ENCODE measurements at regions of chr11 and their contacts with region 1.

Region 1: DNA sequence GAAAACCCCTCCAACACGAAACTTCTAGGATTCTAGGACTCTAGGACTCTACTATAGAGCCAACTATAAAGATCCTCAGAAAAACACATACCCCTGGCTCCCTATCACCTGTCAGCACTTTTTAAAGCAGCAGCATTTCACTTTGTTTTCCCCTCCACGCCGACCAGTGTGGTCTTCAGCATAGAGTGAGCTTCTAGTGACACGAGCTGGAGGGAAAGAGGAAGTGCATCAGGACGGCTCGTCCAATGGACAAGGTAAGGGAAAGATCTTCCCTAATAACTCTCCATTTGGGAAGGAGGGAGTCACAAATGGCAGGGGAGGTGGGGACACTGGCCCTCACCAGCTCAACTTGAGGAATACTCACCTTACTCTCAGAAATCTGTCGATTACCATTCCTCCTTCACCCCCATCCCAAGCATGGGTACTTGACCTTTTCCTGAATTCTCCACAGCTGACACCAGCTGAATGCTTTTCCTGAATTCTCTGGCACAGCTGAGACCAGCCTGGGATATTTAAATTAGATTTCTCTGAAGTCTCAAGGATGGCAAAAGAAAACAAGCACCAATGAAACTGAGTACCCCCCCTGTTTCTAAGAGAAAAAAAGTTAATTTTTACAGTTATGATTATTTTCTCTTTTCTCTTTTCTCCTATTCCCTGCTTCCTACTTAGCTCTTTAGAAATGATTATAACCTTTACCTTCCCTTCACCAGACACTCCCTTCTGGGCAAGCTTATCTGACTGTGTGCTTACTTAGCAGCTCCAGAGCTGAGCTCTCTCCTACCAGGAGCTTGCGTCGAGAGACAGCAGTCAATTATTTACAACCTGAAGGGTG is 33.3 kb upstream of the NNMT start:
- DNase-seq: peak in 4 of 10 donors; percentile 60 to 67 (median 62)
- H3K4me3 ChIP-seq: no peak overlapping the region
- H3K27ac ChIP-seq: peak overlapping the region in 1 of 59 donors; percentile 1
- H3K27me3 ChIP-seq: no peaks in the 10 kb centered on the region
- CTCF ChIP-seq: peak; percentile 44 to 89 (median 72)

Region 2: GRCh38 chr11:113896156-113896879 is 366.6 kb before region 1 on chr11:
- intact Hi-C with region 1: loop called (anchors 1 to 5 kb)
- DNase-seq: peak in 7 of 10 donors; percentile 36 to 67 (median 45)
- H3K4me3 ChIP-seq: no peak overlapping the region
- H3K27ac ChIP-seq: peak overlapping the region in 28 of 59 donors; percentile 3 to 75 (median 46)
- H3K27me3 ChIP-seq: no peaks in the 10 kb centered on the region
- CTCF ChIP-seq: peak; percentile 59 to 90 (median 80)

Region 3: DNA sequence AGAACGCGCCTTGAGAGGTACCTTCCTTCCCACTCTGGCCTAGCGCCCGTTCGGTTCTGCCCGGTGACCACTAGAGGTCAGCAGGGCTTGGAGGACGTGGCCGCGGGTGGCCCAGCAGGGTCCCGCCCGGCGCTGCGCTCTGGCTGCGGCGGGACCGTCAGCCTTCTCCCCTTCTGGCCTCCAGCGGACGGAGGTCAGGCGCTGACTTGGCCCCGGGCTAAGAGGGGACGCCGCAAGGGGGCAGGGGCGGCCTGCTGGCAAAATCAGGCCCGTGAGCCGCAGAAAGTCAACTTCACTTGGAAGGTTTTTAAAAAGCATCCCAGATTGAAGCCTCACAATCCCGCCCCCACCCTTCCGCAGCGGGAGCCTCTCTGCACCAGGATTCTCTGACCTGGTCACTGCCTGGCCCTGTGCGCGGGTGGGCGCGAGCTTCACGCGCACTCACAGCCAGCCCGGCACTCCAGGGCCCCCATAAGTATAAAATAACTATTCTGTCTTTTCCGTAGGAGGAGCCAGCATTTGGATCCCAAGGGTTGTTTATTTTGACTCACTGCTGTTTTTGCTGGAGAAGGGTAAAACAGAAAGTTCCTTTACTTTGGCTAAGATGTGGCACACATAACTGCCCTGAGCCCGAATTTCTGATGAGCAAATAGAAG is 226.6 kb before region 1 on chr11:
- intact Hi-C with region 1: loop called (anchors 1 to 5 kb)
- DNase-seq: peak; percentile 63 to 85 (median 75)
- H3K4me3 ChIP-seq: peak overlapping the region; percentile 18 to 73 (median 55)
- H3K27ac ChIP-seq: peak overlapping the region in 44 of 59 donors; percentile 4 to 81 (median 53)
- H3K27me3 ChIP-seq: no peaks in the 10 kb centered on the region
- CTCF ChIP-seq: peak; percentile 70 to 97 (median 92)

Region 4: GRCh38 chr11:114159802-114160632 is 102.9 kb before region 1 on chr11:
- intact Hi-C with region 1: no loop called
- DNase-seq: peak; percentile 86 to 97 (median 90)
- H3K4me3 ChIP-seq: peak overlapping the region in 45 of 59 donors; percentile 1 to 48 (median 27)
- H3K27ac ChIP-seq: peak overlapping the region; percentile 97 to 100 (median 100)
- H3K27me3 ChIP-seq: no peaks in the 10 kb centered on the region
- CTCF ChIP-seq: peak in 23 of 56 donors; percentile 5 to 32 (median 19)

Region 5: DNA sequence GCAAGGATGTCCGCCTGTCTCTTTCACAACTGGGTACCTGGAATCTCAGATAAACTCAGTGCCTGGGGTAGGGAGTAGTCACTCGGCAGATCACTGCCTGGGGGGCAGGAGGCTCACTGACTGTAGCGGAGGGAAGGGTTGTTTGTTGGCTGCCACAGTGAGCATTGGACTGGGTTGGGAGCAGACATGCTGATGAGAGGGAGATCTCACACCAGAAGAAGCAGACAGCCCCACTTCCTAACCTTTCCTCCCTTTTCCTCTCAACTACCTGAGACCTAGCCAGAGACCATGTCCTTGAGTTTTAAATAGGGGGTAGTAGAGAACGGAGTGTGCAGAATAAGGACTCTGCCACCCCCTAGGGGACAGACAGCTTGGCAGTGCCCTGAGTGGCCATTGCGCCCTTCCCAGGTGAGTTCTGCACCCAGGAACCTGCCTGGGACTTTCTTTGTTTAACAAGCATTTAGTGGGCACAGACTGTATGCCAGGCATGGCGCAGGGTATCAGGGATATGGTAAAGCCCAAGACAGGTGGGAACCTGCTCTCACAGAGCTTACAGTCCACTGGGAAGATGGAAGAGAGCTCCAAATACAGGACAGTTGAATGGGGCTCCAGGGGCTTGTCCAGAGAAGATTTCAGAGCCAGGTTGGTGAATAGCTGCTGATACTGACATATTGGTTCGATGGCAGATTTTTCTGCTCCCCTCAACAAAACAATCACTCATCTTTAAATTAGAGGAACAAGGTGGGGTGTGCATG is 82.4 kb before region 1 on chr11:
- intact Hi-C with region 1: loop called (anchors 5 kb)
- DNase-seq: peak in 4 of 10 donors; percentile 41 to 64 (median 58)
- H3K4me3 ChIP-seq: peak overlapping the region in 51 of 59 donors; percentile 7 to 56 (median 33)
- H3K27ac ChIP-seq: peak overlapping the region; percentile 74 to 100 (median 96)
- H3K27me3 ChIP-seq: no peaks in the 10 kb centered on the region
- CTCF ChIP-seq: peak; percentile 19 to 78 (median 66)

Region 6: GRCh38 chr11:114330373-114330772 is 67.5 kb after region 1 on chr11:
- intact Hi-C with region 1: no loop called
- DNase-seq: no peak
- H3K4me3 ChIP-seq: no peak overlapping the region
- H3K27ac ChIP-seq: no peak overlapping the region
- H3K27me3 ChIP-seq: peaks cover 0 to 5% (median 0%) of the 10 kb centered on the region in 45 donors
- CTCF ChIP-seq: no peak

Measured in dorsolateral prefrontal cortex (tissue), 120 donors.